ENCODE measurements at regions of chr16 and their contacts with region 1.

Region 1: GRCh38 chr16:54193665-54194333 is 92.8 kb downstream of the IRX3 start:
- DNase-seq: peak; percentile 47
- H3K4me3 ChIP-seq: no peak overlapping the region
- H3K27ac ChIP-seq: no peak overlapping the region
- H3K4me1 ChIP-seq: no peaks in the 10 kb centered on the region
- H3K27me3 ChIP-seq: no peaks in the 10 kb centered on the region
- CTCF ChIP-seq: peak; percentile 76 to 78
- POLR2A ChIP-seq: no peak

Region 2: GRCh38 chr16:54180421-54181359 is 13.1 kb before region 1 on chr16:
- CTCF ChIA-PET with region 1: no interaction called
- POLR2A ChIA-PET with region 1: no interaction called
- dilution Hi-C with region 1: no loop called
- intact Hi-C with region 1: no loop called
- DNase-seq: no peak
- H3K4me3 ChIP-seq: no peak overlapping the region
- H3K27ac ChIP-seq: no peak overlapping the region
- H3K4me1 ChIP-seq: no peaks in the 10 kb centered on the region
- H3K27me3 ChIP-seq: peaks cover 0 to 4% of the 10 kb centered on the region in 2 experiments
- CTCF ChIP-seq: no peak
- POLR2A ChIP-seq: no peak

Region 3: DNA sequence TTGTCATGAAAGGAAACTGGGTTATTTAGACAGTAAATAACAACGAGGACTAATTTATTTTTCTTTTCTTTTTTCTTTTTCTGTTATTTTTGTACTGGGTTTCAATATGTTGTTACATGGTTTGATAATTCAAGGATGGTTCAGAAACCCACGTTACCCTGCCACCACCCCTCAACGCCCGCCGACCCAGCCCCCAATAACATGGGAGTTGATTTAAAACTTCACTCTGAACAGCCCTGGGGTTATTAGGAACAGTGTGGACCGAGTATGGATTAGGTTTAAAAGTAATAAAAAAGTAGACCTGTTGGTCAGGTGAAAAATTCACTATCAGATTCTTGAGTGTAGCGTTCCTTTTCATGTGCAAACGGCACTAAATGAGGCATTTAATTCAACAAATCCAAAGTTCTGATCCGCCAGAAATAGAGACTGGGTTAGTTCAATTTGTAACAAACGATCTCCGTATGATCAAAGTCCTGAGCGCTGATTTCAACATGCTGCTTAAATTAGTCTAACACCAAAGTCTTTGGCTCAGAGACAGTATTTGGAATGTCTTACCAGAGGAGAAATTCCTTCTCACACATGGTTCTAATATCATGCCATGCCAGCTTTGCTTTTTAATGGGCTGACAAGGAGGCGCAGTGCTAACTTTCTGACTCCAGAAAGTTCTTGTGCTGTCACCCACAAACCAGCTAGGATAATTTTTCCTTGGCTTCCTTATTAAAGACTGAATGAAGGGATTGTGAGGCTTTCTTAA is 265.9 kb after region 1 on chr16:
- CTCF ChIA-PET with region 1: no interaction called
- POLR2A ChIA-PET with region 1: no interaction called
- dilution Hi-C with region 1: no loop called
- intact Hi-C with region 1: no loop called
- DNase-seq: no peak
- H3K4me3 ChIP-seq: no peak overlapping the region
- H3K27ac ChIP-seq: no peak overlapping the region
- H3K4me1 ChIP-seq: no peaks in the 10 kb centered on the region
- H3K27me3 ChIP-seq: no peaks in the 10 kb centered on the region
- CTCF ChIP-seq: no peak
- POLR2A ChIP-seq: no peak

Region 4: DNA sequence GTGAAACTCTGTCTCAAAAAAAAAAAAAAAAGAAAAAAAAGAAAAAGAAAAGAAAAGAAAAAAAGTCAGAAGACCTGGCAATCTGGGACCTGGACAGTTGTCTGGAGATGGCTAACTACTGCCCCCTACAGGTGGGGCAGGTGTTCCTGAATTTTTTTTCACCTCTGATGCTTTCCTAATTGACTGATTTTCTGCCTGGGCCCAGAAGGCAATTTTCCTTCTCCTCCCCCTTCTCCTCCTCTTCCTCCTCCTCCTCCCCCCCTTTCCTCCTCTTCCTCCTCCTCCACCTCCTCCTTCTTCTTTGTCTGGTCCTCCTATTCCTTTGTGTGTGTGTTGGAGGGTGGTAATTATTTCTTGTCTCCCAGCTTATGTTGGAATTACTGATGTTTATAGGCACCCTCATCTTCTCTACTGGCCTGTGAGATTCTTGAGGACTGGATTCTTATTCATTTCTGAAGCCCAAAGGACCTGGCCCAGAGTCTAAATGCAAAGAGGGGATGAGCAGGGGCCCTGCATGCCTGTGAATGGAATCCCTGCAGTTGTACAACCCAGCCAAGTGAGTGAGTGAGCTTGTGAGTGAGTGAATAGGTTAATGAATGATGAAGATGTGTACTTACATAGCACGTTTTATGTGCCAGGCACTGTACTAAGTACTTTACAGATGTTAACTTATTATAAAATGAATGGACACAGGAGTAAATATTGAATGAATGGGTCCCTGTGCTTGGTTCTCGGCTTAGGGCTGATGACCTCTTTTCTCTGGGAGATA is 763.8 kb after region 1 on chr16:
- CTCF ChIA-PET with region 1: no interaction called
- POLR2A ChIA-PET with region 1: no interaction called
- dilution Hi-C with region 1: no loop called
- intact Hi-C with region 1: loop called (anchors 2 kb)
- DNase-seq: no peak
- H3K4me3 ChIP-seq: no peak overlapping the region
- H3K27ac ChIP-seq: no peak overlapping the region
- H3K4me1 ChIP-seq: no peaks in the 10 kb centered on the region
- H3K27me3 ChIP-seq: no peaks in the 10 kb centered on the region
- CTCF ChIP-seq: peak; percentile 30 to 44
- POLR2A ChIP-seq: no peak